Esophagus muscularis mucosa (tissue), 4 donors: ENCODE measurements at regions of chr11 and their contacts with region 1.

Region 1: GRCh38 chr11:9663699-9664275 is at the start of gene SWAP70:
- DNase-seq: peak; percentile 97
- H3K4me3 ChIP-seq: peak within 1 kb of the TSS; percentile 69 to 98 (median 88)
- H3K27ac ChIP-seq: peak within 1 kb of the TSS; percentile 93 to 98 (median 94)
- H3K4me1 ChIP-seq: peaks cover 6 to 27% (median 23%) of the 10 kb centered on the region in 4 donors
- H3K27me3 ChIP-seq: no peaks in the 10 kb centered on the region
- CTCF ChIP-seq: peak; percentile 52 to 73 (median 64)
- EP300 ChIP-seq: no peak
- POLR2A ChIP-seq: peak; percentile 32
- total RNA-seq, gene SWAP70: 37.8 to 54.9 (median 46.5) TPM

Region 2: DNA sequence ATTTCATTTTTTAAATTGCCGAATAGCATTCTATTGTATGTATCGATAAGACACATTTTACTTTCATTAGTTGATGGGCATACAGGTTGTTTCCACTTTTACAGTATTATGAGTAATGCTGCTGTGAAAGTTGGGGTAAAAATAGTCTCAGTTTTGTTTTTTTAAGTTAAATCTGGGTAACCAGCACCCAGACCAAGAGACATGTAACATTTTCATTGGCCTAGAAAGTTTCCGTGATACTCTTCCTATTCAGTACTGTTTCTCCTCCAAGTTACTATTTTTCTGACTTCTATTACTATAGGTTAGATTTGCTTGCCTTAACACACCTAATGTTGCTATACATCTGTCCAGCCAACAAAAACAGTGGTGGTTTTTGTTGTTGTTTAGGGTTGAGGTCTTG is 267.0 kb before region 1 on chr11:
- intact Hi-C with region 1: no loop called
- DNase-seq: no peak
- H3K4me3 ChIP-seq: no peak overlapping the region
- H3K27ac ChIP-seq: no peak overlapping the region
- H3K4me1 ChIP-seq: peaks cover 18 to 72% (median 66%) of the 10 kb centered on the region in 4 donors
- H3K27me3 ChIP-seq: no peaks in the 10 kb centered on the region
- CTCF ChIP-seq: no peak
- EP300 ChIP-seq: no peak
- POLR2A ChIP-seq: no peak

Region 3: DNA sequence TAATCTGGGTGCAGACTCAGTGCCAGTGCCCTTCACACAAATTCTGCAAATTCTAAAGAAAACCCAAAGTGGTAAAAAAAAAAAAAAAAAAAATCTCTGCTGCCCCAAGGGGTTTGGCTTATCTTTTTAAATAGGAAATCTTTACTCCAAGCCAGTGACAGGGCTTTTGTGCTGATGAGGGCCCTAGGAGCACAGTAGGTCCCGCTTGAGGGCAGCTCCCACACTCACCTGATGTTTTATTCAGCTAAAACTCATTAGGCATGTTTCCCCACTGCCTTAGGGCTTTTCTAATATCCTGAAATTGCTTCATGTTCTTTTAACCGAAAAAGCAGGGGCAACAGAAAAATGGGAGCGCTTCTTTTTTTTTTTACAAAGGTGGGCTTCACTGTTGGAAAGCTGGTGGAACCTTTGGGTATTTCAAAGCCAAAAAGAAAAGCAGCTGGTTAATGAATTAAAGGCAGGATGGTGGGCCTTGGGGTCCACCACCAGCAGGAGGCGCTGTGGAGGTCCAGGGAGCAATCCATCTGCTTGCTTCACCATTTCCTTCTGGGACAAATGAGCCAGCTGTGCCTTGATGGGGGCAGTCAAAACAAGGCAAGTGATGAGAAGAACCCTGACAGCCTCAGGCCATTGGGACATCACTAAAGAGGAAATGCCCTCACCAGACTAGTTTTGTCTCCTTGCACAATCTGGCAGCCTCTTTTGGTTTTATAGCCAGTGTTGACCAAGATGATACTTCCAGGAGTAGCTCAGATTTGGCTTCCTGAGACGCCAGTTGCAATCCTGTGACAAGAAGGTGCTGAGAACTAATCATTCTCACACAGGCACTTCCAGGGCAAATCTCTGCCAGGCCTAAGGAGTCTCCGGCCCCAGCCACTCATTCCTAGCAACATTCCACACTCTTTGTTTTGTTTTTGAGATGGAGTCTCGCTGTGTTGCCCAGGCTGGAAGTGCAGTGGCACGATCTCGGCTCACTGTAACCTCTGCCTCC is 128.7 kb before region 1 on chr11:
- intact Hi-C with region 1: loop called (anchors 5 kb)
- DNase-seq: peak; percentile 96
- H3K4me3 ChIP-seq: no peak overlapping the region
- H3K27ac ChIP-seq: peak overlapping the region; percentile 66 to 75 (median 74)
- H3K4me1 ChIP-seq: peaks cover 6 to 32% (median 28%) of the 10 kb centered on the region in 4 donors
- H3K27me3 ChIP-seq: no peaks in the 10 kb centered on the region
- CTCF ChIP-seq: peak; percentile 71 to 81 (median 77)
- EP300 ChIP-seq: no peak
- POLR2A ChIP-seq: no peak

Region 4: GRCh38 chr11:9703280-9703679 is 39.5 kb after region 1 on chr11:
- intact Hi-C with region 1: loop called (anchors 5 kb)
- DNase-seq: no peak
- H3K4me3 ChIP-seq: no peak overlapping the region
- H3K27ac ChIP-seq: peak overlapping the region; percentile 22 to 69 (median 34)
- H3K4me1 ChIP-seq: peaks cover 21 to 53% (median 46%) of the 10 kb centered on the region in 4 donors
- H3K27me3 ChIP-seq: no peaks in the 10 kb centered on the region
- CTCF ChIP-seq: no peak
- EP300 ChIP-seq: no peak
- POLR2A ChIP-seq: no peak

Region 5: GRCh38 chr11:9748361-9748970 is 84.7 kb after region 1 on chr11:
- intact Hi-C with region 1: loop called (anchors 2 kb)
- DNase-seq: no peak
- H3K4me3 ChIP-seq: no peak overlapping the region
- H3K27ac ChIP-seq: peak overlapping the region; percentile 34 to 65 (median 53)
- H3K4me1 ChIP-seq: peaks cover 11 to 36% (median 28%) of the 10 kb centered on the region in 4 donors
- H3K27me3 ChIP-seq: no peaks in the 10 kb centered on the region
- CTCF ChIP-seq: peak; percentile 71 to 85 (median 80)
- EP300 ChIP-seq: no peak
- POLR2A ChIP-seq: no peak